ENCODE measurements at regions of chr2 and their contacts with region 1.

Region 1: DNA sequence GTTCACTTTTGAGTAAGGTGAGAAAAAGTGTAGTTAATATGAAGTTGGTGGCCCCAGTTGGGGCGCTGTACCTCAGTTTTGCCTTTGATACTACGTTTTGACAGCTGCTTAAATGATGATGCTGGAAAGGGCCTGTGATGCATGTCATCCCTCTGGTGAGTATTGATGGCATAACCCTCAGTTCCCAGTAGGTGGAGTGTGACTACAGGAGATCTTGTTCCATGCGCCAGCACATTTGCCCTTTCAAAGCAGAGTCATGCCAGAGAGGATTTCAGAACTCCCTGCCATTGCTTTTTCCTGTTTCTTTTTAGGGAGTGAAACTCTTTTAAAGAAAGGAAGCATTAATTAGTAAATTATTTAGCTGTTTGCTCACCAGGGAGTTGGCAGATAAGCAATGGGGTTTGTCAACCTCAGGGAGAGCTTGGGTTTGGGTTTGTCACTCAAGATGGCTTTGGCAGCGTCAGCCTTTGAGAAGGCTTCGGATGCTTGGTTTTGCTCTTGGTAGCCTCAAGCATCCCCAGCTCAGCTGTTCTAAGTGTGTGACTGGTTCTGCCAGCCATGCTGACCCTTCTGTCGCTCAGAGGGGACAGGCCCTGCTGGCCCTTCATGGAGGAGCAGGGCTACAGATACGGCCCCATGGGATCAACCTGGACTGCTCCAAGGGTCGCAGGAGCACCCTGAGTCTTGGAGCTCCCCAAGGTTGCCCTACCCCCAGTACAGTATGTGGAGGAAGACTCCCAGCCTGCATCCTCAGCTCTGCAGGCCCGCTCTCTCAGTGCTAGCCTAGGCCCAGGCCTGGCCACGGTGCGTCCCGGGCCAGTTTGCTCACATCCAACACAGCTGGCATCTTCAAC is 29.1 kb downstream of the ARMC9 start:
- DNase-seq: peak; percentile 25 to 72
- ATAC-seq: peak; percentile 93 to 100 (median 99)
- H3K4me3 ChIP-seq: no peak overlapping the region
- H3K4me3 Mint-ChIP-seq: no peak overlapping the region
- H3K27ac ChIP-seq: no peak overlapping the region
- H3K27ac Mint-ChIP-seq: no peak overlapping the region
- H3K4me1 ChIP-seq: no peaks in the 10 kb centered on the region
- H3K4me1 Mint-ChIP-seq: no peaks in the 10 kb centered on the region
- H3K27me3 ChIP-seq: no peaks in the 10 kb centered on the region
- H3K27me3 Mint-ChIP-seq: no peaks in the 10 kb centered on the region
- CTCF ChIP-seq: peak; percentile 80

Region 2: DNA sequence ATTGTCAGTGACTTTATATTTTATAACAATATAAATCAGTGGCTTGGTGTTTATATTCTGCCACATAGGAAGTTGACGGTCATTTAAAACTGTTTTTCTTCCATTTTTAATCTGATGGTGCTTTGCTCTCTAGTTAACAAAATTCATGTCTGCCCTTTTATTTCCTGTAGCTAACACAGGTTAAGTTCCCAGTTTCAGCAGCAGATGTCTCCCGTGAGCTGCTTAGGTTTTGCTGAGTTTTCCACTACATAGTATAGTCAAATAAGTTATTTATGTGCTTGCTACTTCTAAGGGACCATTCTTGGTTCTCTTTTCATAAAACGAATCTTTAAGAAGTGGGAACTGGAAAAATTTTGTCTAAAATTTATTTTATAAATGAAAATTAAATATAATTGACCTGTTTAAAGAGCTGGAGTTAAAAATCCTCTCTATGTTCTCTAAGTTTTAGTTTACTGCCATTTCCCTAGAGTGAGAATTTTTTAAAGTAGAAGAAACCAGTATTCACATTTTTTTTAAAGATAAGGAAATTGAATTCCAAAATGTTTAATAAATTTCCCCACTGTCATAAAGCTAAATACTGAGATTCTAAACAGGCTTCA is 123.3 kb before region 1 on chr2:
- intact Hi-C with region 1: loop called (anchors 5 kb)
- DNase-seq: peak; percentile 54 to 74
- ATAC-seq: peak; percentile 83 to 95 (median 94)
- H3K4me3 ChIP-seq: no peak overlapping the region
- H3K4me3 Mint-ChIP-seq: no peak overlapping the region
- H3K27ac ChIP-seq: no peak overlapping the region
- H3K27ac Mint-ChIP-seq: peak overlapping the region in 1 of 2 donors; percentile 59
- H3K4me1 ChIP-seq: no peaks in the 10 kb centered on the region
- H3K4me1 Mint-ChIP-seq: no peaks in the 10 kb centered on the region
- H3K27me3 ChIP-seq: no peaks in the 10 kb centered on the region
- H3K27me3 Mint-ChIP-seq: no peaks in the 10 kb centered on the region
- CTCF ChIP-seq: peak; percentile 71